Left colon (tissue), 2 donors: ENCODE measurements at regions of chr15 and their contacts with region 1.

Region 1: DNA sequence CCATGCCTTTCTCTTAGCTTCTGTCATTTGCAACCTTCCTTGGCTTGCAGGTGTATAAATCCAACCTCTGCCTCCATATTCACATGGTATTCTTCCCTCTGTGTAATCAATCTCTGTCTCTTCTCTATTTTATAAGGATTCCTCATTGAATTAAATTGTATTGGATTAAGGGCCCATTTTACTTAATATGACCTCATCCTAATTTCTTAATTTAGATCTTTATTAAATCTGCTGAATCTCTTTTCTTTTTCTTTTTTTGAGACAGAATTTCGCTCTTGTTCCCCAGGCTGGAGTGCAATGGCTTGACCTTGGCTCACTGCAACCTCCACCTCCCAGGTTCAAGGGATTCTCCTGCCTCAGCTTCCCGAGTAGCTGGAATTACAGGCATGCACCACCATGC is 7.8 kb downstream of the RPP25 start:
- DNase-seq: no peak
- ATAC-seq: no peak

Region 2: DNA sequence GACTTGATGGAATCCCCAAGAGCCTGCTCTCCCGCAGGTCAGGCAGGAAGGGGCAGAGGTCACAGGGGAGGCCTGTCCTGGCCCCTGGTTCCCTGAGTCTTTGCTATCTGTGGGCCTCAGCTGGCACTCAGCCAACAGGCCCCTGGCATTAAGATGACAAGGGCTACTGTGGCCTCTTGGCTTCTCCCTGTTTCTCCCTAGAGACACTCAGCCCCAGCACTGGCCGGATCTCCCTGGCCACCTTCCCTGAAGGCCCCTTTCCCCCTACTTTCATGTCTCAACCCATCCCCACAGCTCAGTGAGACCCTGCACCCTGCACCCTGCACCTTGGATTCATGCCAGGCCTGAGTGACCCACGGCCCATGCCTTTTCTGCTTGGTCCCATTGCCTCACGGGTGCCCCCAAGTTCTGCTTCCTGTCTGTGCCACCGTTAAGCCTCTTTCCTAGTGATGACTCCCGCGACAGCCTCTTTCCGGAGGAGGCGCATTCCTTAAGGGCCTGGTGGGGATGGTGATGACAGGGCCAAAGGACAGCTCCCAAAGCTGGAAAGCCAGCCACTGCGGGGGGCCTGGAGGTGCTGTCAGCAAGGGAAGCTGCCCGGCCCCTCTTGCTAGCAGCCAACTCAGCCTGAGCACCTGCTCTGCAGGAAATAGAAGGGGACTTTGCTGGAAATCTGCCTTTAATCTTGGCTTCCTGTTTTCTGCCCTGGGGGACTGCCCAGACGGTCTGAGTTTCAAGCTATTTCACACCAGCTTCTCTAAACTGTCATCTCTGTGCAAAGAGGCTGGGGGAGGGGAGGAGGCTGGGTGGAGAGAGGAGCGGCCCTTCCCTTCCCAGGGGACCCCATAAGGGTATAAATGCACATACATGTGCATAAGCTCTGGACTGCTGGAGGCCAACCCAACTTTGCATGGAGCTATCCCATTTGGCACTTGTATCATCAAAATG is 171.7 kb before region 1 on chr15:
- intact Hi-C with region 1: loop called in 1 of 2 experiments (anchors 10 kb)
- DNase-seq: peak in 1 of 2 donors; percentile 48
- ATAC-seq: no peak

Region 3: GRCh38 chr15:74889883-74890664 is 58.7 kb before region 1 on chr15 and contains the start of gene MPI:
- intact Hi-C with region 1: no loop called
- DNase-seq: peak; percentile 85 to 90
- ATAC-seq: peak; percentile 75
- total RNA-seq, gene MPI: 62.2 to 76.7 TPM

Region 4: GRCh38 chr15:75182187-75183131 is 233.7 kb after region 1 on chr15:
- intact Hi-C with region 1: no loop called
- DNase-seq: no peak
- ATAC-seq: peak; percentile 73